A673 (cell line): ENCODE measurements at regions of chr5 and their contacts with region 1.

Region 1: GRCh38 chr5:76325876-76326491 is 77.1 kb upstream of the IQGAP2 start:
- DNase-seq: peak; percentile 56
- H3K4me3 ChIP-seq: no peak overlapping the region
- H3K27ac ChIP-seq: peak overlapping the region; percentile 76
- H3K4me1 ChIP-seq: peaks cover 42% of the 10 kb centered on the region
- H3K27me3 ChIP-seq: no peaks in the 10 kb centered on the region
- CTCF ChIP-seq: no peak

Region 2: DNA sequence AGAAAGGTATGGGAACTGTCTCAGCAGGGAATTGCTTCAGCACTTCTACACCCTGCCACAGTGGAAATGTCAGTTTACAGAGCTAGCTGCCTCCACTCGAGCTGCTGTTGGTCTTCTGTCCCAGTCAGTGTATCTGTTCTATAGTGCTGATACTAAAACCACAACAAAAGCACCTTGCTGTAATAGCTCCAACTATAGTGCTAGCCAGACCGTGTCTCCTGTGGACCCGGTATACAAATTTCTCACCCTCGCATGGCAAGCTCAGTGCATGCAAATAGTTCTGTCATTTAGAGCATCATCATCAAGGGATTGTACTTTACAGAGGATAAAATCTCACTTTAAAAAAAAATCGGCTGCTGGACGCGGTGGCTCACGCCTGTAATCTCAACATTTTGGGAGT is 25.6 kb after region 1 on chr5:
- CTCF ChIA-PET with region 1: no interaction called
- POLR2A ChIA-PET with region 1: interaction called, 14 read pairs
- intact Hi-C with region 1: no loop called
- DNase-seq: no peak
- H3K4me3 ChIP-seq: no peak overlapping the region
- H3K27ac ChIP-seq: no peak overlapping the region
- H3K4me1 ChIP-seq: no peaks in the 10 kb centered on the region
- H3K27me3 ChIP-seq: no peaks in the 10 kb centered on the region
- CTCF ChIP-seq: no peak

Region 3: DNA sequence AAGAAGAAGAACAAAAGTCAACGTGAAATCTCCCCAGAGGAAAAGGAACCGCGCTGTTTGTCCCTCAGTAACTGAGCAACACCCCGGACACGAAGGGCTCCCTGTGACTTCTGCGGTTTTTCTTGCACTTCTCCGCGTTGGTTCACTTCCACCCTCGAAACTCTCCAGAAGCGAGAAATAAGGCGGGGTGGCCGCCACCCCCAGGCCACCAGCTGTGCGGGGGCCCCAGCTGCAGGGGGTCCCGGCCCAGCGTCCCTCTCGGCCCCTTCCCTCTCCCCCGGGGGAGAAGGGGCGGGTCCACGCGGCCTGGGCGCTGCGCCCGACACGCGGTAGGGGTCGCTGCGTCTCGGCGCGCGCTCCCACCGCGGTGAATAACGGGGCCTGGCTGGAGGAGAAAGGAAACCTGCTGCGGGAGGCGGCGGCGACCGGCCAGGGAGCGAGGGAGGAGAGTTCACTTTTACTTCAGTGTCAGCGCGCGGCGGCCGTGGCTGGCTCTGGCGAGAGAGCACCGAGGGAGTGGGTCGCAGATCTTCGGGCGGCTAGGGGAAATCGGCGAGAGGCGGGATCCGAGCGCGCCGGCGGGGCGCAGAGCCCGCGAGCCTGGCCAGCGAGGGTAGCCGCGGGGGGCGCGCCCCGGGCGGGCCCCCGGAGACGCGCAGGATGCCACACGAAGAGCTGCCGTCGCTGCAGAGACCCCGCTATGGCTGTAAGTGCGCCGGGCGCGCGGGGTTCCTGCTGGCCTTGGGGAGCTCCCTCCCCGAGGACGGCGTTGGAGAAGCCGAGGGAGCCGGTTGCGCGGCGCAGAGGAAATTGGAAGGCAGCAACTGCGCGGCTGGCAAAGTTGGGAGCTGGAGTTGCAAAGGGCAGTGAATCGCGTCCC is 77.1 kb after region 1 on chr5 and contains the start of gene IQGAP2:
- CTCF ChIA-PET with region 1: interaction called, 12 read pairs
- POLR2A ChIA-PET with region 1: no interaction called
- intact Hi-C with region 1: no loop called
- DNase-seq: peak; percentile 90
- H3K4me3 ChIP-seq: peak within 1 kb of the TSS; percentile 89
- H3K27ac ChIP-seq: peak within 1 kb of the TSS; percentile 87
- H3K4me1 ChIP-seq: peaks cover 25% of the 10 kb centered on the region
- H3K27me3 ChIP-seq: no peaks in the 10 kb centered on the region
- CTCF ChIP-seq: peak; percentile 85
- total RNA-seq, gene IQGAP2: 26.8 and 34.0 TPM in 2 replicates